ENCODE measurements at regions of chr11 and their contacts with region 1.

Region 1: DNA sequence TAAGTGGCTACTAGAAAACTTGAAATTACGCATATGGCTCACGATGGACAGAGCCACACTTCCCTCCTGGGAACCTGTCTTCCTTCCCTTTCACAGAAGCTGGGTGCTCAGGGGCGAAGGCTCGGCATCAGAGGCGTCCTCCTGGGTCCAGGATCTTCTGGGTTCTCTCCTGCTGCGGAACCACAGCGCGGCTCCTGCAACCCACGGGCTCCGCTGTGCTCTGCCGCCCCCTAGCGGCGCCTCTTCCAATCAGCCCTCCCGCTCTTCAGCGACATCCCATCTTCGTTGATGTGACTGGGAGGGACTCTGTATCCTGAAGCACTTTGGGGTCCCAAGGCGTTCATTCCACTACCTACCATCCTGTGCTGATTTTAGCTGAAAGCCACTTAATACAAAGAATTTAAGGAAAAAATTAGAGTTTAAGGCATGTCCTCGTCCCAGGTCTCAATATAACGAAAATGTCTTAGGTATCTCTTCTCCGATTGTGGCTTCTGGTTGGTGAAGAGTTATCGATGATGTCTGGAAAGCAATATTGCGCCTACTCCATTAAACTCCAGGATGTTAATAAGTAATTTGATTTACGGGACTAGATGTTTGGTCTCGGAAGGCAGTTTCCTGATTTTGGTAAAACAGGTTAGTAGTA is 14.8 kb upstream of the RPS3 start:
- DNase-seq: peak; percentile 86
- CTCF ChIP-seq: peak; percentile 94

Region 2: GRCh38 chr11:75275581-75275980 is 109.0 kb before region 1 on chr11:
- in situ Hi-C with region 1: loop called (anchors 5 kb)
- DNase-seq: no peak
- CTCF ChIP-seq: no peak

Measured in GM13976 (cell line).